ENCODE measurements at regions of chr5 and their contacts with region 1.

Region 1: DNA sequence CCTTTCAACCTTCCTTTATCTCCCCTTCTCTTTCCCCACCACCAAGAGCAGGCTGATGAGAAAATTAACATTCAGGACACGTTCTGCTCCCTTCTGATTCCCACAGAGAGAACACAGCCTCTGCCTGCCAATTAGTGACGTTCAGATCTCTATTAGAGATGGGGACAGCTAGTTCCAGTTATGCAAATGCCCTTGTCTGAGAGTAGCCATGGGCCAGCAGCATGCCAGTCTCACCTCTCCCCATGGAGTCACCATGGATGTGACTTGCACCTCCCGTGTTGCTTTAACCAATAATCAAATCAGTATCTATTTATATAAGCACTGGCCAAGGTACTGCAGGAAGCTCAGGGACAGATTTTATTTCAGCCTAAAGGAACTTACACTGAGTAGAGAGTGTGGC is 61.3 kb downstream of the KCNIP1 start:
- DNase-seq: no peak
- H3K4me3 ChIP-seq: no peak overlapping the region
- H3K27ac ChIP-seq: no peak overlapping the region
- H3K4me1 ChIP-seq: no peaks in the 10 kb centered on the region
- H3K27me3 ChIP-seq: peaks cover 5% of the 10 kb centered on the region
- CTCF ChIP-seq: no peak

Region 2: DNA sequence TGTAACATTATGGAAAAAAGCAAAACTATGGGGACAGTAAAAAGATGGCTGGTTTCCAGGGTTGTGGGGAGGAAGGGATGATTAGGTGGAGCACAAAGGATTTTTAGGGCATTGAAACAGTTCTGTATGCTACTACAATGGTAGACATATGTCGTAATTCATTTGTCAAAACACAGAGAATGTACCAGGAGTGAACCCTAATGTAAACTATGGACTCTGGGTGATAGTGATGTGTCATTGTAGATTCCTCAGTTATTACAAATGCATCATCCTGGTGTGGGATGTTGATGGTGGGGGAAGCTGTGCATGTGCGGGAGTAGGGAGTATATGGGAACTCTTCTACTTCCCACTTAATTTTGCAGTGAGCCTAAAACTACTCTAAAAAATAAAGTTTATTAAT is 83.5 kb after region 1 on chr5:
- CTCF ChIA-PET with region 1: no interaction called
- dilution Hi-C with region 1: loop called (anchors 5 kb)
- in situ Hi-C with region 1: no loop called
- intact Hi-C with region 1: no loop called
- DNase-seq: peak; percentile 36
- H3K4me3 ChIP-seq: no peak overlapping the region
- H3K27ac ChIP-seq: no peak overlapping the region
- H3K4me1 ChIP-seq: peaks cover 7% of the 10 kb centered on the region
- H3K27me3 ChIP-seq: no peaks in the 10 kb centered on the region
- CTCF ChIP-seq: no peak